CD8-positive, alpha-beta T cell (primary cell): ENCODE measurements at regions of chr12 and their contacts with region 1.

Region 1: DNA sequence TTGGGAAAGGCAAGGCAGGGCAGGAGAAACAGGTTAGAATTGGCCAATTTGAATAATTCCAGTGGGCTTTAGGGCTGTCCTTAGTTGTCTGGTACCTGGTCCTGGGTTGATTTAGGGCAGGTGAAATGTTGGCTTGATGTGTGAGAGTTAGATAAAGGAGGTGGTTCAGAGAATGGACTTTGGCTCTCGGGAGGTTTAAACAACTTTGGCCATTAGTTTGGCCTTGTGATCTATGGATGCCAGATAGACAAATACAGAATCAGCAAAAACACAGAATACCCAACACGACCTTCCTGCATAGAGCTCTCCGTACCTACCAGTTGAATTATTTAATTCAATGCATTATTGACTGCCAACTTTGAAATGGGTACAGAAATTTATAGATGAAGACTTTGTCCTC is 35.1 kb downstream of the SCN8A start:
- DNase-seq: no peak
- ATAC-seq: no peak
- H3K4me3 ChIP-seq: no peak overlapping the region
- H3K4me3 Mint-ChIP-seq: no peak overlapping the region
- H3K27ac ChIP-seq: no peak overlapping the region
- H3K27ac Mint-ChIP-seq: no peak overlapping the region
- H3K4me1 ChIP-seq: no peaks in the 10 kb centered on the region
- H3K4me1 Mint-ChIP-seq: no peaks in the 10 kb centered on the region
- H3K27me3 ChIP-seq: no peaks in the 10 kb centered on the region
- H3K27me3 Mint-ChIP-seq: peaks cover 16% of the 10 kb centered on the region
- CTCF ChIP-seq: no peak

Region 2: GRCh38 chr12:51788876-51789275 is 162.8 kb after region 1 on chr12:
- CTCF ChIA-PET with region 1: no interaction called
- POLR2A ChIA-PET with region 1: no interaction called
- intact Hi-C with region 1: no loop called
- DNase-seq: no peak
- ATAC-seq: no peak
- H3K4me3 ChIP-seq: no peak overlapping the region
- H3K4me3 Mint-ChIP-seq: no peak overlapping the region
- H3K27ac ChIP-seq: no peak overlapping the region
- H3K27ac Mint-ChIP-seq: no peak overlapping the region
- H3K4me1 ChIP-seq: peaks cover 9% of the 10 kb centered on the region
- H3K4me1 Mint-ChIP-seq: peaks cover 16% of the 10 kb centered on the region
- H3K27me3 ChIP-seq: no peaks in the 10 kb centered on the region
- H3K27me3 Mint-ChIP-seq: no peaks in the 10 kb centered on the region
- CTCF ChIP-seq: no peak

Region 3: DNA sequence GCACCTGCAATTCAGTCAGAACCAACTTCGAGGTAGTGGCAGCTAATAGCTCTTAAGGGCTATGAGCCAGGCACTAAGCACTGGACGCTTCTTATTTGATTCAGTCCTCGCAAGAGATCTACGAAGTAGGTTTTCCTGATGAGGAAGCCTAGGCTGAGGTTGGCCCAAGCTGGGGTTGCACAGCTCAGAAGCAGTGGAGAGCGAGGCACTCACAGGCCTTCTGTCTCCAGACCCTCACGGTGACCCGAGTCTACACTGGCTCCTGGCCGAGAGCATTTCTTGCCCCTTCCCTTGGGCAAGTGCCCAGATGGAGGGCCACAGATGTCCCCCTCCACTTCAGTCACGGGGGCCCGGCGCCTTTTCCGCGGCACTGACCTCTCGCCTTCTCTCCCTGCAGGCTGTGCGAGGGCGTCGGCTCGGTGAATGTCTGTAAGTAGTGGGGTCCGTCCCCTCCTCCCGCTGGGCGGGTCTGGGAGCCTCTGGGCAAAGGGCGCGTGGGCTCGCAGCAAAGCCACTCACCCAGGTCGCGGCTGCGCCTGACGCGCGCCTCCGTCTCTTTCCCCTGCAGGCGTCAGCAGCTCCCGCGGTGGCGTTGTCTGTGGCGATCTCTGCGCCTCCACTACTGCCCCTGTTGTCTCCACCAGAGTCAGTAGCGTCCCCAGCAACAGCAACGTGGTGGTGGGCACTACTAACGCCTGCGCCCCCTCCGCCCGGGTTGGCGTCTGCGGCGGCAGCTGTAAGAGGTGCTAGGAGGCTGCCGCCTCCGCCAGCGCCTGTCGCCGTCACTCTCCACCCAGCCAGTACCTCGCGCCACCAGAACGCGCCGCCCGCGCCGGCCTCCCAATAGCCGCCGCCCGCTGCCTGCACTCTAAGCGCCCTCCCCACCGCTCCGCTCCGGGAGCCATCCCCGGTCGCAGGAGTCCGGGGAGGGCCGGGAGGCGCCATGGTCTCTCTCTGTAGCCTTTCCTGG is 682.0 kb after region 1 on chr12:
- CTCF ChIA-PET with region 1: no interaction called
- POLR2A ChIA-PET with region 1: no interaction called
- intact Hi-C with region 1: loop called in 1 of 2 experiments (anchors 5 kb)
- DNase-seq: peak in 7 of 9 experiments; percentile 3 to 63 (median 32)
- ATAC-seq: peak; percentile 54
- H3K4me3 ChIP-seq: peak overlapping the region in 1 of 2 experiments; percentile 28
- H3K4me3 Mint-ChIP-seq: no peak overlapping the region
- H3K27ac ChIP-seq: no peak overlapping the region
- H3K27ac Mint-ChIP-seq: peak overlapping the region; percentile 60
- H3K4me1 ChIP-seq: peaks cover 11% of the 10 kb centered on the region
- H3K4me1 Mint-ChIP-seq: peaks cover 17% of the 10 kb centered on the region
- H3K27me3 ChIP-seq: peaks cover 0 to 8% of the 10 kb centered on the region in 2 experiments
- H3K27me3 Mint-ChIP-seq: peaks cover 52% of the 10 kb centered on the region
- CTCF ChIP-seq: no peak